Motor neuron (in vitro differentiated cells): ENCODE measurements at regions of chr14 and their contacts with region 1.

Region 1: GRCh38 chr14:28294834-28295440 is 471.6 kb upstream of the FOXG1 start:
- ATAC-seq: no peak
- H3K4me3 ChIP-seq: no peak overlapping the region
- H3K27ac ChIP-seq: no peak overlapping the region
- H3K4me1 ChIP-seq: no peaks in the 10 kb centered on the region

Region 2: GRCh38 chr14:28608851-28609828 is 314.2 kb after region 1 on chr14:
- in situ Hi-C with region 1: loop called in 1 of 9 experiments (anchors 25 kb)
- ATAC-seq: peak; percentile 52 to 74 (median 62)
- H3K4me3 ChIP-seq: peak overlapping the region in 2 of 5 donors; percentile 6 to 13
- H3K27ac ChIP-seq: peak overlapping the region; percentile 74 to 87
- H3K4me1 ChIP-seq: peaks cover 34 to 70% of the 10 kb centered on the region in 2 donors